Ovary (tissue), 10 donors: ENCODE measurements at regions of chr3 and their contacts with region 1.

Region 1: GRCh38 chr3:113514265-113514769 is 639 bp downstream of the SPICE1 start:
- DNase-seq: no peak
- H3K4me3 ChIP-seq: peak overlapping the region; percentile 83
- H3K27ac ChIP-seq: peak overlapping the region; percentile 9 to 81
- H3K4me1 ChIP-seq: no peaks in the 10 kb centered on the region
- H3K27me3 ChIP-seq: no peaks in the 10 kb centered on the region
- CTCF ChIP-seq: no peak
- EP300 ChIP-seq: no peak
- POLR2A ChIP-seq: no peak

Region 2: GRCh38 chr3:113626503-113627371 is 112.4 kb after region 1 on chr3:
- intact Hi-C with region 1: loop called in 1 of 4 experiments (anchors 10 kb)
- DNase-seq: peak; percentile 19 to 52 (median 29)
- H3K4me3 ChIP-seq: no peak overlapping the region
- H3K27ac ChIP-seq: no peak overlapping the region
- H3K4me1 ChIP-seq: no peaks in the 10 kb centered on the region
- H3K27me3 ChIP-seq: no peaks in the 10 kb centered on the region
- CTCF ChIP-seq: peak; percentile 29 to 76 (median 62)
- EP300 ChIP-seq: no peak
- POLR2A ChIP-seq: no peak

Region 3: DNA sequence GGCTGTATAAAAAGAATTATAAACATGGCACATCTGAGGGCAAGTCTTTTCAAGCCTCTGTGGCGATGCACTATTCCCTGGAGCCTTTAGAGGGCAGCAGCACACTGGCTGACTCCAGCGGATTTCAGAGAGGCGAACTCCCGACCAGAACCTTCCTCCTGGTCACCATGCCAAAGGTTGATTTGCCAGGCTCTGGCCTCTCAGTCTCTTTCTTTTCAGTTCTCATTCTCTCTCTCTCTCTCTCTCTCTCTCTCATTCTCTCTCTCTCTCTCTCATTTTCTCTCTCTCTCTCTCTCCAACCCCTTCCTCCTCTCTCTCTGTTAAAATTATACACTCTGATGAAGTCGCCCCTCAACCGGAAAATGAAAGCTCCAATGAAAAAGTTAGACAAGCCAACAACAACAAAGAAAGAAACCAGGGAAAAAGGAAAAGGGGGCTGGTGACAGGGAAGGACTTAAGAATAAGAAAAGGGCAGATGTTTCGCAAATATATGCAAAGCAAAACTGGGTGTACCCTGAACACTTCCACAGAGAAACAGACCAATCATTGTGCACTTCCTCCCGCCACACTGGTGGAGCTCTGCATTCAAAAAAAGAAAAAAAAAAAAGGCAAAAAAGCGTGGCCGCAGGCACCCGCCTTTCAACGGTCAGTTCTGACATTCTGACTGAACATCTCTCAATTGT is 869.7 kb after region 1 on chr3:
- intact Hi-C with region 1: no loop called
- DNase-seq: peak; percentile 82 to 87 (median 87)
- H3K4me3 ChIP-seq: peak overlapping the region; percentile 42
- H3K27ac ChIP-seq: peak overlapping the region; percentile 42 to 63
- H3K4me1 ChIP-seq: peaks cover 7% of the 10 kb centered on the region
- H3K27me3 ChIP-seq: no peaks in the 10 kb centered on the region
- CTCF ChIP-seq: peak; percentile 84 to 91 (median 90)
- EP300 ChIP-seq: no peak
- POLR2A ChIP-seq: no peak